Activated T-helper 1 cell treated with anti-CD3 and anti-CD28 coated beads, Interleukin-12 subunit alpha, Interleukin-12 subunit beta, Interleukin-2, Interleukin-4 antibody, amounts not matched to agents 30 ng/mL and 10 ng/mL and 1 ng/mL, durations not matched to agents 14 hours and 24 hours and 36 hours (primary cell): ENCODE measurements at regions of chr1 and their contacts with region 1.

Region 1: DNA sequence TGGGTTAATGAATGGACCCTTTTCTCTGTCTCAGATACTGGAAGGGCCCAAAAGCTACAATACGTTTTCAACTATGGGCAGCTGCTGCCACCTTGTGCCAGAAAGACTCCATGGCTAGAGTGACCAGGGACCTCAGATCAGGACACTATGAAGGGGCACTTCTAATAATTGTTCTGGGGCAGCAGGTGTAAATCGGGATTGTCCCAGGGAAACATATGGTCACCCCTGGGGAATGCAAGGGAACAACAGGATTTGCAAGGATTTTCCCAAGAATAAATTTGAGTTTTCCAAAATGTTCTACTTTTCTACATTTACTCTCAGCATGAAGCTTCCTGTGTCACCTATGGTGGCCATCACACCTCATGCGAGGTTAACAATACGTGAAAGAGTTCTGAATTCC is 12.0 kb upstream of the FCAMR start:
- DNase-seq: peak; percentile 36
- H3K4me3 Mint-ChIP-seq: no peak overlapping the region
- H3K27ac Mint-ChIP-seq: no peak overlapping the region
- H3K4me1 Mint-ChIP-seq: no peaks in the 10 kb centered on the region
- H3K27me3 Mint-ChIP-seq: peaks cover 34% of the 10 kb centered on the region

Region 2: GRCh38 chr1:206489980-206490770 is 492.0 kb before region 1 on chr1:
- intact Hi-C with region 1: loop called (anchors 10 kb)
- DNase-seq: peak; percentile 43
- H3K4me3 Mint-ChIP-seq: no peak overlapping the region
- H3K27ac Mint-ChIP-seq: peak overlapping the region; percentile 70
- H3K4me1 Mint-ChIP-seq: peaks cover 13% of the 10 kb centered on the region
- H3K27me3 Mint-ChIP-seq: no peaks in the 10 kb centered on the region

Region 3: DNA sequence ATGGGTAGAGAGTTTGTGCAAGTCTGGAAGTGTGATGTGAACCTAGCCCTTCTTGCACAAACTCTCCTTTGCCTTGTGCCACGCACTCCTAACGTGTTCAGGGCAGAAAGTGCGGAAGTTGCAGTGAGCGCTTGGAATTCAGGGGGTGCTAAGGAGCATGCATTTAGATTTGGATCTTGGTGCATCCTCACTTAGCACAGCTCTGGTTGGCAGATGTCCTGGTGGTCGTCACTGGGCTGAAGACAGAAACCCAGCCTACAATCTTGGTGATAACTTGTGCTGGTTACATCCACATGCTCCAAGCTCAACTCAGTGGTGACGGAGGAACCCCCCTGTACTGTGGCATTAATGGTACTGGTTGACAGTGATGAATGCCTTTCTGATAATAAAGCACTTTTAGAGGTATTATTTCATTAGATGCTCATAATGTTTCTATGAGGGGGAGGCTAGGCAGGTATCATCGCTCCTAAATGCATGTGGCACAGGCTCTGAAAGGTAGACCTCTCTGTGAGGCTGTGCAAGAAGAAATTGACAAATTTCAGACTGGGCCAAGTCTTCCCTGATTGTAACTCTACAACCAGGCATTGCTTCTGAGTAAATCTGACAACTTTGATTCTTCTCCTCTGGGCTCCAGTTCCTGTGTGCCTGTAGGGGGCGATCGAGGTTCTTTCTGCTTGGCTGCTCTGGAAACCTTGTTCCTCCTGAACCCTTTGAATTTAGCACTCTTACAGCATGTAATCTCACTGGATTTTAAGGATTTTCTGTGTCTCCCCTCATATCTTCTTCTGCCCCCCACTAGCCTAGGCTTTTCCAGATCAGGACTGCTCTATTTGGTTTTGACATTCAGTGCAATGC is 256.9 kb before region 1 on chr1:
- intact Hi-C with region 1: loop called (anchors 1 kb)
- DNase-seq: peak; percentile 37
- H3K4me3 Mint-ChIP-seq: no peak overlapping the region
- H3K27ac Mint-ChIP-seq: peak overlapping the region; percentile 7
- H3K4me1 Mint-ChIP-seq: peaks cover 63% of the 10 kb centered on the region
- H3K27me3 Mint-ChIP-seq: no peaks in the 10 kb centered on the region

Region 4: GRCh38 chr1:206808615-206809014 is 173.6 kb before region 1 on chr1:
- intact Hi-C with region 1: loop called (anchors 1 kb)
- DNase-seq: peak; percentile 43
- H3K4me3 Mint-ChIP-seq: no peak overlapping the region
- H3K27ac Mint-ChIP-seq: peak overlapping the region; percentile 15
- H3K4me1 Mint-ChIP-seq: peaks cover 57% of the 10 kb centered on the region
- H3K27me3 Mint-ChIP-seq: peaks cover 13% of the 10 kb centered on the region

Region 5: GRCh38 chr1:206935491-206936067 is 46.6 kb before region 1 on chr1:
- intact Hi-C with region 1: loop called (anchors 1 kb)
- DNase-seq: peak; percentile 28
- H3K4me3 Mint-ChIP-seq: no peak overlapping the region
- H3K27ac Mint-ChIP-seq: no peak overlapping the region
- H3K4me1 Mint-ChIP-seq: peaks cover 12% of the 10 kb centered on the region
- H3K27me3 Mint-ChIP-seq: peaks cover 4% of the 10 kb centered on the region

Region 6: GRCh38 chr1:206955476-206956451 is 26.5 kb before region 1 on chr1:
- intact Hi-C with region 1: no loop called
- DNase-seq: no peak
- H3K4me3 Mint-ChIP-seq: no peak overlapping the region
- H3K27ac Mint-ChIP-seq: no peak overlapping the region
- H3K4me1 Mint-ChIP-seq: peaks cover 18% of the 10 kb centered on the region
- H3K27me3 Mint-ChIP-seq: no peaks in the 10 kb centered on the region

Region 7: DNA sequence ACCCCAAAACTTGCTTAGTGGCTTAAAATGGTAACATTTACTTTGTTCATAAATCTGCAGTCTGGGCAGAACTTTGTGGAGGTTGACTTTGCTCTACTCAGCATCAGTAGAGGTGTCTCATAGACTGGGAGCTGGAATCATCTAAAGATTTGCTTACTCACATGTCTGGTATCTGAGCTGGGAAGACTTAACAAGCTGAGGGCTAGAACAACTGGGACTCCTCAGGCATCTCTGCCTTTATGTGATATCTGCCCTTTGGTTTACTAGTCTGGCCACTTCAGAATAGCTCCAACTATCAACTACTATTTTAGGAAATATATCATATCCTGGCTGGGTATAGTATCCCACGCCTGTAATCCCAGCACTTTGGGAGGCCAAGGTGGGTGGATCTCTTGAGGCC is 204.3 kb after region 1 on chr1:
- intact Hi-C with region 1: no loop called
- DNase-seq: no peak
- H3K4me3 Mint-ChIP-seq: no peak overlapping the region
- H3K27ac Mint-ChIP-seq: no peak overlapping the region
- H3K4me1 Mint-ChIP-seq: no peaks in the 10 kb centered on the region
- H3K27me3 Mint-ChIP-seq: peaks cover 12% of the 10 kb centered on the region